CD8-positive, alpha-beta T cell (primary cell): ENCODE measurements at regions of chr11 and their contacts with region 1.

Region 1: DNA sequence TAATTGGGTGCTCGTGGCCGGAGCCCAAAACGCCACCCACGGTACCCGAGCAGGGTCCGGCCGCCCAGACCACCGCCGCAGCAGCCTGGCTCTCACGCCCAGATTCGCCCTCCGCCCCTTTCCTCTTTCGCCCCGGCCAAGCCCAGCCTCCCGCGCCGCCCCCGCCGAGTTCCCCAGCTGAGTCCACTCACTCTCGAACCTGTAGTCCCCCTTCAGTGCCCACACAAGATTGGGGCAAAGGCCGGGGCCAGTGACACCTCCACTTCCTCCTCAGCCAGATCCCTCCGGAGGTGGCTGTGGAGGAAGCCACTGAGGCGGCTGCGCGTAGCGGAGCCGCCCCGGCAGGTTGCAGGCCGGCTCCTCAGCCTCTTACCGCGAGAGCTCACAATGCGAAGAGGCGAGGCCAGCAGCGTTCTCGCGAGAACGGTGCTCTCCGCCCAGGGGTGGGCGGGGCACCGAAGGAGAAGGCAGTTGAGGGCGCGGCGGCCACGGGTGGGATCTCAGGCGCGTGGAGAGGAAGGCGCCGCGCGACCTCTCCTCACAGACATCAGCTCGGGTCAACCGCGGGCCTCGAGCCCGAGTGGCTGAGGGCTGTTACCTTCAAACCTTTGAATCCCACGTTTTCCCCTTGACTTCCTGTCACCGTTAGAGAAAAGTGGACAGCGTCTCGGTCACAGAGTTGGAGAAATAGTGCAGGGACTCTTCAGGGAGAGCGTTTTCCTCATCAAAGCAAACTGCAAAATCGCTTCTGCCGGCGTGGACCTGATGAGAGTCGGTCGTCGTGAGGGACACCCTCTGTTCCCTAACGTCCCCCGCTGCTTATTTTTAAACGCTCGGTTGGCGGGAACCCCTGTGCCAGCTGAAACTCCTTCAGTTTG is at the start of gene BTBD10:
- DNase-seq: peak; percentile 81 to 98 (median 90)
- ATAC-seq: peak; percentile 98
- H3K4me3 ChIP-seq: peak within 1 kb of the TSS; percentile 69 to 92
- H3K4me3 Mint-ChIP-seq: peak within 1 kb of the TSS; percentile 98
- H3K27ac ChIP-seq: peak within 1 kb of the TSS; percentile 87 to 92
- H3K27ac Mint-ChIP-seq: peak within 1 kb of the TSS; percentile 96
- H3K4me1 ChIP-seq: peaks cover 18% of the 10 kb centered on the region
- H3K4me1 Mint-ChIP-seq: peaks cover 49% of the 10 kb centered on the region
- H3K27me3 ChIP-seq: no peaks in the 10 kb centered on the region
- H3K27me3 Mint-ChIP-seq: no peaks in the 10 kb centered on the region
- CTCF ChIP-seq: no peak
- total RNA-seq, gene BTBD10: 17.0 to 19.2 TPM

Region 2: DNA sequence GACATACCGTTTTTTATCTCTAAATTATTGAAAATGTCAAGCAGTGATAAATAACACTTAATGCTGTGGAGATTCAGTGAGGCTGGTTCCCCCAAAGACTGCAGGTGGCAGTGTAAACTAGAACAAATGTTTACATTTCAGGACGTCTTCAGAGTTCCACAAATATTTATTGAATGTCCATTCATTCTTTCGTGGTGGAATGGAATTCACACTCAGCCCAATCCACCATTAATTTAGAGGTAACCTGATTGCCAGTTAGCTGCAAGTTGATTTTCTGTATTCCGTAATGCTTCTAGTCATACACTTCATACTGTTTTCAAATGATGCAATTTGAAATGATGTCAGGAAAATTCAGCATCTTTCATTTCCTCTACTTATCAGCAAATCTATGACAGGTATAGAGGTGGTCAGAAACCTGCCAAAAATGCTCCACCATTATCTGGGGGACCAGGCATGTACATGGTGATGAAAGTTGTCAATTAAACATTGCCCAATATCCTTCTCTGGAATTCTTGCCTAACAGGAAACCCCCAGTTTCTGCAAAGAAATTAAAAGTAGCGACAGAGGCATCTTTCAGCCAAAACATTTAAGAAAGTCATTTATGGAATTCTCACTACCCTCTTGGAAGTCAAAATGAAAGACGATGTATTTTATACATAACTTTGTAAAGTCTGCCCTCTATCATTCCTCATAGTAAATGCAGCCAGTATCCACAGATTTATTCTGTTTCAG is 279.9 kb before region 1 on chr11:
- CTCF ChIA-PET with region 1: no interaction called
- POLR2A ChIA-PET with region 1: no interaction called
- intact Hi-C with region 1: loop called in 1 of 2 experiments (anchors 1 kb)
- DNase-seq: peak in 2 of 9 experiments; percentile 39 to 49
- ATAC-seq: no peak
- H3K4me3 ChIP-seq: no peak overlapping the region
- H3K4me3 Mint-ChIP-seq: no peak overlapping the region
- H3K27ac ChIP-seq: no peak overlapping the region
- H3K27ac Mint-ChIP-seq: no peak overlapping the region
- H3K4me1 ChIP-seq: peaks cover 4% of the 10 kb centered on the region
- H3K4me1 Mint-ChIP-seq: peaks cover 6% of the 10 kb centered on the region
- H3K27me3 ChIP-seq: peaks cover 0 to 3% of the 10 kb centered on the region in 2 experiments
- H3K27me3 Mint-ChIP-seq: peaks cover 19% of the 10 kb centered on the region
- CTCF ChIP-seq: peak; percentile 36

Region 3: GRCh38 chr11:13276832-13277767 is 186.0 kb before region 1 on chr11:
- CTCF ChIA-PET with region 1: no interaction called
- POLR2A ChIA-PET with region 1: no interaction called
- intact Hi-C with region 1: loop called (anchors 1 to 5 kb)
- DNase-seq: peak; percentile 95 to 98 (median 96)
- ATAC-seq: peak; percentile 80
- H3K4me3 ChIP-seq: peak overlapping the region; percentile 96 to 98
- H3K4me3 Mint-ChIP-seq: peak overlapping the region; percentile 96
- H3K27ac ChIP-seq: peak overlapping the region; percentile 56 to 82
- H3K27ac Mint-ChIP-seq: peak overlapping the region; percentile 92
- H3K4me1 ChIP-seq: peaks cover 34% of the 10 kb centered on the region
- H3K4me1 Mint-ChIP-seq: peaks cover 41% of the 10 kb centered on the region
- H3K27me3 ChIP-seq: no peaks in the 10 kb centered on the region
- H3K27me3 Mint-ChIP-seq: no peaks in the 10 kb centered on the region
- CTCF ChIP-seq: no peak

Region 4: DNA sequence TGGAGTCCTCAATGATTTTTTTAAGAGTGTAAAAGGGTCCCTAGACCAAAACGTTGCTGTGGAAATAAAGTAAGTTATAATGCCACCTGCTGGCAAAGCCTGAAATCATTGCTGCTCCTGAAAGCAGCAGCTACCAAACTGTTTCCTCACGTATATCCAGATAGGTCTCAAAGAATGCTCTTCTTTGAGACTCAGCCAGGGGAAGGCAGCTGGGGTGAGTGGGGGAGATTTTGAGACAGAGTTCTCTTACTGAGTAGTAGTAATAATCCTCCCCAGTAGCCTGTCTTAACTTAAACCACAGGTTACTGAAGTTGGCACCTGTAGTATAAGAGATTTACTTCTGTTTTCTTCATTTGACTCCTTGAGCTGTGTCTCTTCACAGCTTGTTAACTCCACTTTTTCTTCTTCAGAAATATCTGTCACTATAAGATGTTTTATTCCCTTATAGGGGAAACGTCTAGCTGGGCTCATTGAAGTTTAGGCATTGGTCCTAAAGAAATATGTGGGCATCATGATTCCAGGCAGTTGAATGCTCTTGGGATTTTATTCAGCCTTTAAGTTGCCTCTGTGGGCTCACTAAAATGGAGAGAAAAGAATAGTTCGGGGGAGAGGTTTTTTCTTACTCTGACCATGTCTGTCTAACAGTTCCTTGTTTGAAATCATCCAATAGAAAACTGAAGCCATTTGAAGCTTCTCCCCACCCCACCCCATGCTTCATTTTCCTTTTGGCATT is 78.1 kb before region 1 on chr11:
- CTCF ChIA-PET with region 1: interaction called, 5 read pairs
- POLR2A ChIA-PET with region 1: interaction called, 7 read pairs
- intact Hi-C with region 1: loop called in 1 of 2 experiments (anchors 5 kb)
- DNase-seq: peak in 4 of 9 experiments; percentile 17 to 50 (median 28)
- ATAC-seq: peak; percentile 29
- H3K4me3 ChIP-seq: no peak overlapping the region
- H3K4me3 Mint-ChIP-seq: no peak overlapping the region
- H3K27ac ChIP-seq: no peak overlapping the region
- H3K27ac Mint-ChIP-seq: no peak overlapping the region
- H3K4me1 ChIP-seq: no peaks in the 10 kb centered on the region
- H3K4me1 Mint-ChIP-seq: peaks cover 3% of the 10 kb centered on the region
- H3K27me3 ChIP-seq: no peaks in the 10 kb centered on the region
- H3K27me3 Mint-ChIP-seq: no peaks in the 10 kb centered on the region
- CTCF ChIP-seq: peak; percentile 59

Region 5: GRCh38 chr11:13503393-13503792 is 40.3 kb after region 1 on chr11:
- CTCF ChIA-PET with region 1: no interaction called
- POLR2A ChIA-PET with region 1: no interaction called
- intact Hi-C with region 1: no loop called
- DNase-seq: no peak
- ATAC-seq: no peak
- H3K4me3 ChIP-seq: no peak overlapping the region
- H3K4me3 Mint-ChIP-seq: no peak overlapping the region
- H3K27ac ChIP-seq: no peak overlapping the region
- H3K27ac Mint-ChIP-seq: no peak overlapping the region
- H3K4me1 ChIP-seq: no peaks in the 10 kb centered on the region
- H3K4me1 Mint-ChIP-seq: no peaks in the 10 kb centered on the region
- H3K27me3 ChIP-seq: no peaks in the 10 kb centered on the region
- H3K27me3 Mint-ChIP-seq: peaks cover 23% of the 10 kb centered on the region
- CTCF ChIP-seq: no peak

Region 6: DNA sequence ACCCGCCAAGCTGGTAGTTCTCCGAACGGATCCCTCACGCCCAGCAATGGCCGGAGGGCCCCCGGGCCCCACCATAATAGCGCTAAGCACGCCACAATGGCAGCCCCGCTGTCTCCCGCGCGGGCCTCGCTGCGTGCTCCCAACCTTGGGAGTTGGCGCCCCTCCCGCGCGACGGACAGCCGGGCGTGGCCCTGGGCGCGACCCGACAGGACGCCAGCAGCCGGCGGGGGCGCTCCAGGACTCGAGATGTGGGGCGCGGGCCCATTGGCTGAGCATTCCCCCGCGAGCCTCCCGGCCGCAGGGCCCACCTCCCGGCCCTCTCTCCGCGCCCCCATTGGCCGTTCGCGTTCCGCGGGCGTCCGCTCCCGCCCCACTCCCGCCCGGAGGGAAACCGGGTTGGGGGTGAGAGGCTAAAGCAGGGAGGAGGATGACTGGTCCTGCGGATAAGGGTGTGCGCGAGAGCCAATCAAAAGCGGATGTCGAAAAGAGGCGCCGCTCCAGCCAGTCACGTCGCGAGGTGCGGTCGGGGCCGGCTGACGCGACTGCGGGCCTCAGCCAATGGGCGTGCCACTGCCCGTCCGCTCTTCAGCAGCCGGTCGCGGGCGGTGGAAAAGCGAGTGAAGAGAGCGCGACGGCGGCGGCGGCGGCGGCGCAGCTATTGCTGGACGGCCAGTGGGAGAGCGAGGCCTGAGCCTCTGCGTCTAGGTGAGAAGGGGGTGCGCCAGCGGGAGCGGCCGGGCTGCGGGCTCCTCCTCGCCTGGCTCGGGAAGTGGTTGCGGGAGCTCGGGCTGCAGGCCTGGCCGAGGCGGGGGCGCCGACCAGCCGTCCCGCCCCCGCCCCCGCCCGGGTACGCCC is 205.2 kb after region 1 on chr11 and contains the start of gene FAR1:
- CTCF ChIA-PET with region 1: interaction called, 4 read pairs
- POLR2A ChIA-PET with region 1: no interaction called
- intact Hi-C with region 1: loop called (anchors 1 to 2 kb)
- DNase-seq: peak; percentile 92 to 98 (median 95)
- ATAC-seq: peak; percentile 89
- H3K4me3 ChIP-seq: peak within 1 kb of the TSS; percentile 76 to 81
- H3K4me3 Mint-ChIP-seq: peak within 1 kb of the TSS; percentile 98
- H3K27ac ChIP-seq: peak within 1 kb of the TSS; percentile 66 to 69
- H3K27ac Mint-ChIP-seq: peak within 1 kb of the TSS; percentile 96
- H3K4me1 ChIP-seq: peaks cover 14% of the 10 kb centered on the region
- H3K4me1 Mint-ChIP-seq: peaks cover 45% of the 10 kb centered on the region
- H3K27me3 ChIP-seq: no peaks in the 10 kb centered on the region
- H3K27me3 Mint-ChIP-seq: peaks cover 5% of the 10 kb centered on the region
- CTCF ChIP-seq: peak; percentile 70
- total RNA-seq, gene FAR1: 29.8 to 34.0 TPM